ENCODE measurements at regions of chr1 and their contacts with region 1.

Region 1: DNA sequence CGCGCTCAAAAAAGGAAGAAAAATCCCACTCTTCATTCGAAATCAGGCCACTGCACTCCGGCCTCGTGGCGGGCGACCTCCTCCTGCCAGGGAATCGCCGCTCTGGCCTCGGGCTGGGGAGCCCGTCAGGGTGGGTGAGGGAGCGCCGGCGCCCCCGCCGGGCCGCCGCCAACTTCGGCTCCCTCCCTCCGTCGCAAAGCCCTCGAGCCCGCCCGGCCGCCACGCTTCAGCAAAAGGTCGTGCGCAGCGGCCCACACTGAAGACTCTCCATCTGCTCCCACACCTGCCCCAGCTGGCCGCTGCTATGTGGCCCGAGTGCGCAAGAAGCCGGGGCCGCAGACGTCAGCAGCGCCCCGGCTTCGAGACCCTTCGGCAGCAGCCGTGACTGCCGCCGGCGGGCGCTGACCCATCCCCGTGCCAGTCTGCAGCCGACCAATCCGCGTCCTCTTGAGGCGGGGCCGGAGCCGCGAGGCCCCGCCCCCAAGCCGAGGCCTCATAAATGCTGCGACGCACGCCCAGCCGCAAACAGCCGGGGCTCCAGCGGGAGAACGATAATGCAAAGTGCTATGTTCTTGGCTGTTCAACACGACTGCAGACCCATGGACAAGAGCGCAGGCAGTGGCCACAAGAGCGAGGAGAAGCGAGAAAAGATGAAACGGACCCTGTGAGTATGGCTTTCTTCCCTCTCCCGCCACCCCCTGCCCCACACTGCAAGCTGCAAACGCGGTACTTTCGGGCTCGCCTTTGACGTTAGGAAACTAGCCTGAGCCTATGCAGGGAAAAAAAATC is at the start of gene RGS2:
- DNase-seq: peak; percentile 89
- H3K4me3 ChIP-seq: peak within 1 kb of the TSS; percentile 73 to 78
- H3K27ac ChIP-seq: peak within 1 kb of the TSS; percentile 86 to 88
- H3K4me1 ChIP-seq: no peaks in the 10 kb centered on the region
- H3K27me3 ChIP-seq: no peaks in the 10 kb centered on the region
- CTCF ChIP-seq: peak in 2 of 4 experiments; percentile 7 to 20
- POLR2A ChIP-seq: peak; percentile 100
- total RNA-seq, gene RGS2: 70.2 to 129 TPM

Region 2: DNA sequence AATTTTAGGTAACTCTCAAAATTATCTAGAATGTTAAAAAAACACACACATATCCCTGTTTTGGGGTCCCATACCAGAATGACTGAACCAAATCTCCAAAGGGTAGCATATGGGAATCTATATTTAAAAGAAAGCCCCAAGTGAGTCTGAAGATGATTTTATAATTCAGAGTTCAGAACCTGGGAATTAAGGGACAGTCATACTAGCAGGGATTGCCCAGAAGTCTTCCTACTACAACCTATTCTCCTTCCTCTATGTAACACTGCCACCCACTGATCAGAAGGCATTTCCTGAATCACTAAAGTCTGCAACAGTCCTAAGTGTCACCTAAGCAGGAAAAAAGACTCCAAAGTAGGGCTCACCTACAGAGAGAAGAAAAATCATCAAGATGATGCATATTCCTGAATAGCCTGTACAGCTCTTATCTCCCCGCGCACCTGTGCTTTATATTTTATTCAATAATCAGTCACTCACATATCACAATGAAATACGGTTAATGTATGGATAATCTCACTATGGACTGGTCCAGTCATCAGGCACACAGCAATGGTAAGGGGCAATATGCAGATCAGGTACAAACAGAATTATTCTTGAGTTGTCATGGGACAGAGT is 228.3 kb before region 1 on chr1:
- intact Hi-C with region 1: loop called (anchors 10 kb)
- DNase-seq: peak; percentile 19
- H3K4me3 ChIP-seq: no peak overlapping the region
- H3K27ac ChIP-seq: no peak overlapping the region
- H3K4me1 ChIP-seq: peaks cover 3% of the 10 kb centered on the region
- H3K27me3 ChIP-seq: no peaks in the 10 kb centered on the region
- CTCF ChIP-seq: peak in 3 of 4 experiments; percentile 24 to 49 (median 46)
- POLR2A ChIP-seq: no peak

Region 3: DNA sequence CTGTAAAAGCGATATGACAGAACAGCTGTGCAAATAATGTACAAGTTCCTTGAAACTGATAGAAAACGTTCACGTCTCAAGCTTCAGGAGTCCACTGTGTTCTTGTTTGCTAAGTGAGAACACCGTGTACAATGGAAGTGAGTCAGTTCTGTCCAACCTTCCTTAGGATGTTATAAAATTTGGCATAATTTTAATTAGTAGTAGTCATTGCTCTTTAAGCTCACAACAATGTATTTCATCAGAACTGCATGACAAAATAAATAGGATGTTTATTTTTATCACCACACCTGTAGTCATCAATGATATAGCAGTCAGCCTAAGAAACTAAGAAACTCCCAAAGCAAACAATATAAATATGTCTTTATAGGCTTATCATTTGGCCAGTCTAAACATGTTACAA is 53.1 kb after region 1 on chr1:
- intact Hi-C with region 1: no loop called
- DNase-seq: peak; percentile 56
- H3K4me3 ChIP-seq: no peak overlapping the region
- H3K27ac ChIP-seq: peak overlapping the region in 1 of 2 donors; percentile 52
- H3K4me1 ChIP-seq: no peaks in the 10 kb centered on the region
- H3K27me3 ChIP-seq: no peaks in the 10 kb centered on the region
- CTCF ChIP-seq: no peak
- POLR2A ChIP-seq: no peak

Region 4: DNA sequence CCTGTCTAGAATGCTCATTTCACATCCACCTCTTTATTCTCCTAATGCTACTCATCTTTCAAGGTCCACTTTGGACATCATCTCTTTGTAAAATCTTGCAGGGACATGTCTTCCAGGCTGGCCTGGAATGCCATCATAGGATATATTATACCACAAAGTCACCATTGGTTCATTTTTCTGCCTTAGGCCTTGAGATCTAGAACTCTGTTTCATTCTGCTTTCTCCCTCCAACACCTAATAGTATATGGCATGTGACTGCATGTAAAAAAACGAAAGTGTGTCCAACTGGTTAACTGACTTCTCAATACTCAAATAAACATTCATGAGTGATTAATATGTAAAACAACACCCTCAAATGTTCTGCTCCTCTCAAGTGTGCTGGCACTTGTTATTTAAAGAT is 84.2 kb after region 1 on chr1:
- intact Hi-C with region 1: loop called (anchors 5 kb)
- DNase-seq: no peak
- H3K4me3 ChIP-seq: no peak overlapping the region
- H3K27ac ChIP-seq: no peak overlapping the region
- H3K4me1 ChIP-seq: no peaks in the 10 kb centered on the region
- H3K27me3 ChIP-seq: no peaks in the 10 kb centered on the region
- CTCF ChIP-seq: no peak
- POLR2A ChIP-seq: no peak

Region 5: DNA sequence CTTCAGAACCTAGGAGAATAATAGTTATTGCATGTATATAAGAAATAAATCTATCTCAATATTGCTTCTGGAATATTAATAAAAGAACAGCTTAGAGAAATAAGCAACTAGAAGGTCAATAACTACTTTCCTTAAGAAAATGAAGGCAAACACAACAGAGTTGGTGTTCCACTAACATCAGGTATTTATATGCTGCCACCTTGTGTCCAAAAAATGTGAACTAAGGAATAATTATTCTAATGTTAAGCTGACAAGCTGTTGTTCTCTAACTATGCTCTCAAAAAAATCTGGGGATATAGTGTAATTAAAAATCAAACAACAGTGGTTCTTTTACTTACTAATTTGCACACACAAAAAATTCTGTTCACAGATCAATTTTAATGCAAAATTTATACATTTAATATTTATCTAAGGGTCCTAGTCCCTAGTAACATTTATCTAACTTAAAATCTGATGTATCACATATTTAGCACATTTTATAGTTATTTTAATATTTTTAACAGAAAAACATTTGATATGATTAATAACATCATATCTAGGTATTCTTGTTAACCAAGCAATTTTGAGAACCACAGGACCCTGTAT is 210.8 kb after region 1 on chr1:
- intact Hi-C with region 1: loop called (anchors 5 kb)
- DNase-seq: peak; percentile 34
- H3K4me3 ChIP-seq: no peak overlapping the region
- H3K27ac ChIP-seq: no peak overlapping the region
- H3K4me1 ChIP-seq: no peaks in the 10 kb centered on the region
- H3K27me3 ChIP-seq: no peaks in the 10 kb centered on the region
- CTCF ChIP-seq: peak; percentile 29 to 78 (median 68)
- POLR2A ChIP-seq: no peak